Panc1 (cell line): ENCODE measurements at regions of chr10 and their contacts with region 1.

Region 1: GRCh38 chr10:125160856-125161706 is 718 bp upstream of the CTBP2 start:
- DNase-seq: no peak
- ATAC-seq: peak; percentile 91
- H3K4me3 ChIP-seq: peak overlapping the region; percentile 75 to 80
- H3K27ac ChIP-seq: peak overlapping the region; percentile 93
- H3K4me1 ChIP-seq: peaks cover 24% of the 10 kb centered on the region
- H3K27me3 ChIP-seq: no peaks in the 10 kb centered on the region
- CTCF ChIP-seq: peak; percentile 82; the same call in 1 of the 2 replicates

Region 2: GRCh38 chr10:124911124-124912067 is 249.7 kb before region 1 on chr10:
- CTCF ChIA-PET with region 1: no interaction called
- POLR2A ChIA-PET with region 1: no interaction called
- in situ Hi-C with region 1: no loop called
- intact Hi-C with region 1: no loop called
- DNase-seq: no peak
- ATAC-seq: no peak
- H3K4me3 ChIP-seq: no peak overlapping the region
- H3K27ac ChIP-seq: peak overlapping the region; percentile 5; the same call in 1 of the 2 replicates
- H3K4me1 ChIP-seq: peaks cover 11% of the 10 kb centered on the region; the same call in 1 of the 2 replicates
- H3K27me3 ChIP-seq: no peaks in the 10 kb centered on the region
- CTCF ChIP-seq: no peak; the same call in 1 of the 2 replicates

Region 3: GRCh38 chr10:124975977-124976514 is 185.0 kb before region 1 on chr10:
- CTCF ChIA-PET with region 1: no interaction called
- POLR2A ChIA-PET with region 1: no interaction called
- in situ Hi-C with region 1: no loop called
- intact Hi-C with region 1: no loop called
- DNase-seq: no peak
- ATAC-seq: no peak
- H3K4me3 ChIP-seq: no peak overlapping the region
- H3K27ac ChIP-seq: no peak overlapping the region
- H3K4me1 ChIP-seq: no peaks in the 10 kb centered on the region
- H3K27me3 ChIP-seq: no peaks in the 10 kb centered on the region
- CTCF ChIP-seq: no peak

Region 4: GRCh38 chr10:125084191-125084613 is 76.9 kb before region 1 on chr10:
- CTCF ChIA-PET with region 1: no interaction called
- POLR2A ChIA-PET with region 1: interaction called, 11 read pairs
- in situ Hi-C with region 1: no loop called
- intact Hi-C with region 1: loop called (anchors 10 kb)
- DNase-seq: peak; percentile 86
- ATAC-seq: peak; percentile 94
- H3K4me3 ChIP-seq: peak overlapping the region in 1 of 2 experiments; percentile 25; a peak in 2 of 4 replicates
- H3K27ac ChIP-seq: peak overlapping the region; percentile 81
- H3K4me1 ChIP-seq: peaks cover 34% of the 10 kb centered on the region
- H3K27me3 ChIP-seq: no peaks in the 10 kb centered on the region
- CTCF ChIP-seq: no peak; the same call in 1 of the 2 replicates

Region 5: GRCh38 chr10:125107166-125107949 is 53.7 kb before region 1 on chr10:
- CTCF ChIA-PET with region 1: no interaction called
- POLR2A ChIA-PET with region 1: no interaction called
- in situ Hi-C with region 1: no loop called
- intact Hi-C with region 1: no loop called
- DNase-seq: no peak
- ATAC-seq: no peak
- H3K4me3 ChIP-seq: no peak overlapping the region
- H3K27ac ChIP-seq: no peak overlapping the region
- H3K4me1 ChIP-seq: no peaks in the 10 kb centered on the region; the same call in 1 of the 2 replicates
- H3K27me3 ChIP-seq: no peaks in the 10 kb centered on the region
- CTCF ChIP-seq: no peak

Region 6: DNA sequence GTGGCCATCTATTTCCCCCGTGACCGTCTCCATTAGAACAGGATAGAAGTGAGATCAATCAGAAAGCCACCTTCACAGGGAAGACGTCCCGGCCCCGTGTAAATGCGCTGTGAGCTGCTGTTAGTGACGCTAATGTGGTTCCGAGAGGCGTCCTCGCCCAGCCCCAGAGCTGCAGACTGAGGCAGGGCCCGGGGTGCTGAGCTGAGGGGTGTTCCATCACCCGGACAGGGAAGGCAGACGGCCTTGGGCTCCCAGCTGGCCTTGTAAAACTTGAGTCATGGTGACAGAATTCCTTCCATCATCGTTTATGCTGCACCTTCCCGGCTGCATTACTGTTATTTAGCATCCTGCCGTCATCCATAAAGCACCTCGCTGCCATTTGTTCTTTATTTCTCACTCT is 194.6 kb after region 1 on chr10:
- CTCF ChIA-PET with region 1: no interaction called
- POLR2A ChIA-PET with region 1: no interaction called
- in situ Hi-C with region 1: no loop called
- intact Hi-C with region 1: loop called (anchors 5 kb)
- DNase-seq: no peak
- ATAC-seq: no peak
- H3K4me3 ChIP-seq: no peak overlapping the region
- H3K27ac ChIP-seq: no peak overlapping the region
- H3K4me1 ChIP-seq: no peaks in the 10 kb centered on the region
- H3K27me3 ChIP-seq: peaks cover 12% of the 10 kb centered on the region; the same call in 1 of the 2 replicates
- CTCF ChIP-seq: no peak

Region 7: GRCh38 chr10:125417605-125418004 is 256.5 kb after region 1 on chr10:
- CTCF ChIA-PET with region 1: interaction called, 10 read pairs
- POLR2A ChIA-PET with region 1: no interaction called
- in situ Hi-C with region 1: no loop called
- intact Hi-C with region 1: no loop called
- DNase-seq: no peak
- ATAC-seq: no peak
- H3K4me3 ChIP-seq: no peak overlapping the region
- H3K27ac ChIP-seq: no peak overlapping the region
- H3K4me1 ChIP-seq: no peaks in the 10 kb centered on the region
- H3K27me3 ChIP-seq: peaks cover 7% of the 10 kb centered on the region
- CTCF ChIP-seq: no peak

Region 8: DNA sequence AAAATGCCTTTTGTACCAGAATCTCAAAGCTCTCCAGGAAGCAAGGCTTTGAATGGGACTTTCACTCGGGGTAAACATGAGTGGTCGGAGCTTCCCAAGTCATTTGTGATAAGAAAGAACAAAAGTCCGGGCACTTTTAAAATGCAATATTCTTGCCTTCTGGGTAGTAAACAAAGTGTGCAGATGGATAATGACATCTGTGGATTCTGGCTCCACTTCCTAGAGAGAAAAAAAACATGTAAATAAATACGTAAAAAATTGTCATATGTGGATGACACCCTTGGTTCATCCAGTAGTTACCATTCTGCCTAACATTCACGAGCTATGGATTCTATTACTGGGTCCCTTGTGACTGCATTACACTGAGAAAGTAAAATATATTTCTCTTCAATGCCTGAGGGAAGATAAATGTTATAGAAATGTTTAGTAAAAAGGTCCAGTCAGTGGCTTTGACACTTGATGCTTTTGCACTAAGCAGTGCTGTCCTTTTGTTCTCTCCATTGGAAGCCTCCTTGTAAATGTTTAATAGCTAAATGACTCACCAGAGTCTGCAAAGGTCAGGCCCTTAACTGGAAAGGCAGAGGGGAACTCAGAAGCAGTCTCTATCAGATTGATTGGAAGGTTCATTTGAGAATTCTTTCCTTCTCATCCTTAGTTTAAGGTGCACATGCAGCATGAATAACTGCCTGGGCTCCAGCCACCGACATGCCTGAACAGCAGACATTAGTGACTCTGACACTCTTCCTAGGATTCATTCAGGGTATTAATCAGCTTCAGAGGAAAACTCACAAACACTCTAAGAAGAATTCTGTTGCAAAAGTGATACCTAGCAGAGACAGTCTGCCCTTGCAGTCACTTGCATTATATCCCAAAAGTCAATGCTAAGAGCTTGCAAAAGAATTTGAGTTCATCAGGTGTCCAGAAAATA is 546.7 kb after region 1 on chr10:
- CTCF ChIA-PET with region 1: no interaction called
- POLR2A ChIA-PET with region 1: no interaction called
- in situ Hi-C with region 1: no loop called
- intact Hi-C with region 1: loop called (anchors 10 kb)
- DNase-seq: no peak
- ATAC-seq: peak; percentile 93
- H3K4me3 ChIP-seq: no peak overlapping the region
- H3K27ac ChIP-seq: peak overlapping the region; percentile 72
- H3K4me1 ChIP-seq: peaks cover 35% of the 10 kb centered on the region
- H3K27me3 ChIP-seq: no peaks in the 10 kb centered on the region
- CTCF ChIP-seq: no peak